ENCODE measurements at regions of chr10 and their contacts with region 1.

Region 1: DNA sequence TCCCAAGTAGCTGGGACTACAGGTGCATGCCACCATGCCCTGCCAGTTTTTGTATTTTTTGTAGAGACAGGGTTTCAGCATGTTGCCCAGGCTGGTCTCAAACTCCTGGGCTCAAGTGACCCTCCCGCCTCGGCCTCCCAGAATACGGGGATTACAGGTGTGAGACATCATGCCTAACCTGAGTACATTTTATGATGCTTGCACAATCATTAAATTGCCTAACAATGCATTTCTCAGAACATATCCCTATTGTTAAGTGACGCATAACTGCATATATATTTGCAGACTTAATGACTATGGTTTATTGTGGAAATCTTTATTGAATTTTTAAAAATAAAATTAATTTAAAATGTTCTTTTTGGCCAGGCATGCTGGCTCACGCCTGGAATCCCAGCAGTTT is 30.7 kb downstream of the INA start:
- DNase-seq: no peak
- ATAC-seq: no peak
- H3K4me3 ChIP-seq: no peak overlapping the region
- H3K27ac ChIP-seq: no peak overlapping the region
- H3K4me1 ChIP-seq: no peaks in the 10 kb centered on the region
- H3K27me3 ChIP-seq: no peaks in the 10 kb centered on the region
- CTCF ChIP-seq: no peak

Region 2: GRCh38 chr10:103224133-103224532 is 83.5 kb before region 1 on chr10:
- CTCF ChIA-PET with region 1: no interaction called
- POLR2A ChIA-PET with region 1: interaction called, 16 read pairs
- intact Hi-C with region 1: no loop called
- DNase-seq: no peak
- ATAC-seq: no peak
- H3K4me3 ChIP-seq: no peak overlapping the region
- H3K27ac ChIP-seq: no peak overlapping the region
- H3K4me1 ChIP-seq: peaks cover 17% of the 10 kb centered on the region
- H3K27me3 ChIP-seq: no peaks in the 10 kb centered on the region
- CTCF ChIP-seq: no peak

Region 3: GRCh38 chr10:103413564-103413963 is 106.0 kb after region 1 on chr10:
- CTCF ChIA-PET with region 1: no interaction called
- POLR2A ChIA-PET with region 1: no interaction called
- intact Hi-C with region 1: no loop called
- DNase-seq: no peak
- ATAC-seq: no peak
- H3K4me3 ChIP-seq: no peak overlapping the region
- H3K27ac ChIP-seq: no peak overlapping the region
- H3K4me1 ChIP-seq: no peaks in the 10 kb centered on the region
- H3K27me3 ChIP-seq: no peaks in the 10 kb centered on the region
- CTCF ChIP-seq: no peak